A549 (cell line): ENCODE measurements at regions of chr6 and their contacts with region 1.

Region 1: GRCh38 chr6:121430514-121431460 is 4.7 kb upstream of the GJA1 start:
- DNase-seq: peak; percentile 15 to 59
- ATAC-seq: peak in 1 of 2 experiments; percentile 58; a peak in 3 of 6 replicates
- H3K4me3 ChIP-seq: no peak overlapping the region
- H3K27ac ChIP-seq: peak overlapping the region; percentile 11 to 63; a peak in 4 of 6 replicates
- H3K4me1 ChIP-seq: peaks cover 20% of the 10 kb centered on the region
- CTCF ChIP-seq: peak; percentile 86
- EP300 ChIP-seq: no peak
- POLR2A ChIP-seq: no peak
- RAD21 ChIP-seq: peak; percentile 94 to 95

Region 2: DNA sequence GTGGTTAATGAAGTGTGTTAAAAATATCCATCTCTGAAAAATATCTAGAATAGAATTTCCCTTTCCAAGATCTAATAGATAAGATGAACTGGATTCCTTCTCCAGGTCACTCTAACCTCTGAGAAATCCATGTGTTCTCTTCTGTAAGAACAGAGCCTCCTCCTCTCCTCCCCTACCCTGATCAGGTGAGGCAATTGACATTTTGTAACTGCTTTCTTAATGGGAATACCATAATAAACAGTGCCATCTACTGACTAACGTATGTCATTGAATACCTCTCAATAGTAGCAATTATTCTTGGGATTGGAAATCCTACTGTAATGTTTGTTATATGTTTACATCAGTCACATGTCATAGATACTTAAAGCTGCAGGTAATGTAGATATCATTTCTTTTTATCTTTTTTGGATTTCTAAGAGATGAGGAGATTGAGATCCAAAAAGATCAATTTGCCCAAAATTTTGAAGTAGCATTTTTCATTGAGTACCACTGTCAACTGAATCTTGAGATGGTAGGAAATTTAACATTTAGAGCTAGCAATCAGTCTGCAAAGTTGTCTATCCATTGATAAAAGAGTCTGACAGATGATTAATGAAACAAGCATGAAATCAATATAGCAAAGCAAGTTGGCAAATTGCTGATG is 602.9 kb after region 1 on chr6:
- CTCF ChIA-PET with region 1: interaction called, 31 read pairs
- POLR2A ChIA-PET with region 1: no interaction called
- DNase-seq: peak; percentile 18 to 57
- ATAC-seq: peak; percentile 73 to 83
- H3K4me3 ChIP-seq: no peak overlapping the region
- H3K27ac ChIP-seq: no peak overlapping the region; a peak in 1 of 6 replicates
- H3K4me1 ChIP-seq: 0 out of 3 replicates have a peak, but pooled peaks cover 3% of the 10 kb centered on the region
- CTCF ChIP-seq: peak; percentile 63
- EP300 ChIP-seq: no peak
- POLR2A ChIP-seq: no peak
- RAD21 ChIP-seq: peak; percentile 80 to 84

Region 3: GRCh38 chr6:122184401-122184827 is 753.6 kb after region 1 on chr6:
- CTCF ChIA-PET with region 1: interaction called, 26 read pairs
- POLR2A ChIA-PET with region 1: no interaction called
- DNase-seq: peak; percentile 2 to 26
- ATAC-seq: peak; percentile 68 to 75; a peak in 3 of 6 replicates
- H3K4me3 ChIP-seq: no peak overlapping the region
- H3K27ac ChIP-seq: no peak overlapping the region
- H3K4me1 ChIP-seq: no peaks in the 10 kb centered on the region
- CTCF ChIP-seq: peak; percentile 51; the same call in 2 of the 3 replicates
- EP300 ChIP-seq: no peak
- POLR2A ChIP-seq: no peak
- RAD21 ChIP-seq: peak; percentile 68 to 71